ENCODE measurements at regions of chr11 and their contacts with region 1.

Region 1: DNA sequence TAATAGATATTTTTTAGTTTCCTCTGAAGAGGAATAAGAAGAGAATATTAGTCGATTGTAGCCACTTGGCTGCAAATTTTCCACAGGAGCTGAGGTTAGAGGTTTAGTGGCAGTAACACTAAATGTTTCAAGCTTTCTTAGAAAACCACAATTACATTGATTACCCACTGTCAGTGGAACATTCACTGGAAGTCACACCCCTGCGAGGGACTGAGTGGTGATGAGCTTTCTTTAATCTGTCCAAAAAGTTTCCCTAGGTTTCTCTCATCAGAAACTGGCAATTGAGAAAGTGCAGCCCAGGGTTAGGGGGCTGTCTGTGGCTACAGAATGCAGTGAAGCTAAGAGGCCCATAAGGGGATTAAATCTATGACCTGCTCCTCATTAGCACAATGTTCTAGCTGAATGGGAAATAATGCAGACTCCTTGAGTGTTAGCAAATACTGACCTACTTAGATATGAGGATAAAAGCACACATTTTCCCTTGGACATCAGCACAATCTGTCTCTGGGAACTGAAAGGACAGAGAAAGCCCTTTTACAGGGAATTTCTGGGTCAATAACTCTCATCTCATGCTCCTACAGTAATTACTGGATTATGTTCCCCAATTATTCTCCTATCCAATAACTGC is 189.5 kb downstream of the FAM76B start:
- DNase-seq: no peak
- H3K4me3 ChIP-seq: no peak overlapping the region
- H3K27ac ChIP-seq: no peak overlapping the region
- H3K4me1 ChIP-seq: no peaks in the 10 kb centered on the region
- CTCF ChIP-seq: no peak

Region 2: DNA sequence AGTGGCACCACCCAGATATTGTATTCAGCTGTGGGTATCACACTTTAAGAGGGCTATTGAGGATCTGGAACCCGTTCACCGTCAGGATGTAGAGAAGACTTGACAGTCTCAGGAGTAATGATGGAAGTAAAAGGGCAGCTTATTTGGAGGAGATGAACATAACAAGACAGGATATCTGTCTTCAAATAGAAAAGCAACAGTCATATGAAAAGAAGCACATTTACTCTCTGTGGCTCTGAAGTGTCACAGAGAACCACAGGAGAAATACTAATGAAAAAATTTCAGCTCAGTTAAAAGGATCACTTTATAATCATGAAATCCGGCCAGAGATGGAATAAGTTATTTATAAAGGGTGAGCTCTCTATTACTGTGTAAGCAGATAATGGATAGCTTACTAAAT is 11.3 kb before region 1 on chr11:
- CTCF ChIA-PET with region 1: no interaction called
- POLR2A ChIA-PET with region 1: no interaction called
- intact Hi-C with region 1: loop called (anchors 1 kb)
- DNase-seq: no peak
- H3K4me3 ChIP-seq: no peak overlapping the region
- H3K27ac ChIP-seq: no peak overlapping the region
- H3K4me1 ChIP-seq: no peaks in the 10 kb centered on the region
- CTCF ChIP-seq: no peak

Measured in OCI-LY7 (cell line).